ENCODE measurements at regions of chr17 and their contacts with region 1.

Region 1: DNA sequence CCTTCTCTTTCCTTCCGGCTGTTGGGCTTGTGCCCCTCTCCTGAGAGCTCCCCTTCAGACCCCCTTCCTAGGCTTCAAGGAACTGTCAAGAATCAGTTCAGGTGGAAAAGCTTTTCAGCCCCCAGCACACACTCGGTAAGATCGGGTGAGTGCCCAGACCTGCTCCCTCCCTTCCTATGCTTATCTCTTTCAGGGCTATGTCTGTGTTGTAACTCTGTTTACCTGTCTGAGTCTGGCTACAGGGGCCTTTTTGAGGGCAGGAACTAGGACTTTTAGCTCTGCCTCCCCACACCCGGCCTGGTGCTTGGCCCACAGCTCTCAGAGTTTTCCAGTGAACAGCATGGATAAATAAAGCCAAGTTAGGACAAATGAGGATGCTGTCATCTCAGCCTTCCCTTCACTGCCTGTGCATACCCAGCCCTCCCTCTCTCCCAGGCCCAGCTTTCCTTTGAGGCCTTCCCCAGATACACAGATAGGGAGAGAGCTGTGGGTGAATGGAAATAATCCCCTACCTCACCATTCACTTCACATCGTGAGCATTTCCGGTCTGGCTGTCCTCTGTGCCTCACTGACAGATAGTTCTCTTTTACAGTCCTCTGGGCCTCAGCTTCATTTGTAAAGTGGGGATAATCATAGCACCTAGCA is 5.7 kb upstream of the MRPS23 start:
- DNase-seq: no peak
- H3K4me3 ChIP-seq: no peak overlapping the region
- H3K27ac ChIP-seq: no peak overlapping the region
- H3K4me1 ChIP-seq: peaks cover 13% of the 10 kb centered on the region
- H3K27me3 ChIP-seq: no peaks in the 10 kb centered on the region
- CTCF ChIP-seq: no peak

Region 2: GRCh38 chr17:56269556-56270389 is 1585.7 kb before region 1 on chr17:
- intact Hi-C with region 1: no loop called
- DNase-seq: no peak
- H3K4me3 ChIP-seq: no peak overlapping the region
- H3K27ac ChIP-seq: no peak overlapping the region
- H3K4me1 ChIP-seq: no peaks in the 10 kb centered on the region
- H3K27me3 ChIP-seq: no peaks in the 10 kb centered on the region
- CTCF ChIP-seq: no peak

Region 3: GRCh38 chr17:57552114-57552624 is 303.3 kb before region 1 on chr17:
- intact Hi-C with region 1: no loop called
- DNase-seq: no peak
- H3K4me3 ChIP-seq: no peak overlapping the region
- H3K27ac ChIP-seq: no peak overlapping the region
- H3K4me1 ChIP-seq: no peaks in the 10 kb centered on the region
- H3K27me3 ChIP-seq: no peaks in the 10 kb centered on the region
- CTCF ChIP-seq: no peak

Region 4: GRCh38 chr17:57970706-57971105 is 115.2 kb after region 1 on chr17:
- intact Hi-C with region 1: no loop called
- DNase-seq: peak; percentile 4
- H3K4me3 ChIP-seq: no peak overlapping the region
- H3K27ac ChIP-seq: no peak overlapping the region
- H3K4me1 ChIP-seq: no peaks in the 10 kb centered on the region
- H3K27me3 ChIP-seq: no peaks in the 10 kb centered on the region
- CTCF ChIP-seq: no peak

Region 5: DNA sequence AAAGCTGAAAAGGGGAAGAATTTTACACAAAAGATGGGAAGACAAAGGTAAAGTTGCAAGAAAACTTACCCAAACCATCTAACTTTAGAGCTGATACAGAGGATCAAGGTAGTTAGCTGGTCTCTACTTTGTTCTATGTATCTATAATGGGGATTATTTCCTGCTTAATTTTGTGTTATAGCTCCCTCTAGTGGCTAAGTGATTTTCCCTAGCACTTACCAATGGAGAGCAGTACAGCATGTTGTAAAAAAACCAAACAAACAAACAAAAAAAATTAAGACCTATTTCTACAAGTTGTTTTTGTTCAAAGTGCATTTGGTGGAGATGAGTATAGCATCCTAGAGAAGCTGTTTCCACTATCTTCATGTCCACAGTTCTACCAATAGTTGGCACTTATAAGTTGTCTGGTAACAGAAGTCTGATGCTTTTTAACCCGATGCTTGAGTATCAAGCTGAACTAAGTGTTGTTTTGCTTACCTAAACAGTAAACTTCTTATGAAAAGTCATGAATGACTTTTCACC is 144.0 kb after region 1 on chr17:
- intact Hi-C with region 1: loop called (anchors 2 kb)
- DNase-seq: no peak
- H3K4me3 ChIP-seq: no peak overlapping the region
- H3K27ac ChIP-seq: no peak overlapping the region
- H3K4me1 ChIP-seq: no peaks in the 10 kb centered on the region
- H3K27me3 ChIP-seq: no peaks in the 10 kb centered on the region
- CTCF ChIP-seq: peak; percentile 89

Region 6: GRCh38 chr17:58043221-58044181 is 188.0 kb after region 1 on chr17:
- intact Hi-C with region 1: no loop called
- DNase-seq: no peak
- H3K4me3 ChIP-seq: no peak overlapping the region
- H3K27ac ChIP-seq: no peak overlapping the region
- H3K4me1 ChIP-seq: no peaks in the 10 kb centered on the region
- H3K27me3 ChIP-seq: no peaks in the 10 kb centered on the region
- CTCF ChIP-seq: no peak

Region 7: DNA sequence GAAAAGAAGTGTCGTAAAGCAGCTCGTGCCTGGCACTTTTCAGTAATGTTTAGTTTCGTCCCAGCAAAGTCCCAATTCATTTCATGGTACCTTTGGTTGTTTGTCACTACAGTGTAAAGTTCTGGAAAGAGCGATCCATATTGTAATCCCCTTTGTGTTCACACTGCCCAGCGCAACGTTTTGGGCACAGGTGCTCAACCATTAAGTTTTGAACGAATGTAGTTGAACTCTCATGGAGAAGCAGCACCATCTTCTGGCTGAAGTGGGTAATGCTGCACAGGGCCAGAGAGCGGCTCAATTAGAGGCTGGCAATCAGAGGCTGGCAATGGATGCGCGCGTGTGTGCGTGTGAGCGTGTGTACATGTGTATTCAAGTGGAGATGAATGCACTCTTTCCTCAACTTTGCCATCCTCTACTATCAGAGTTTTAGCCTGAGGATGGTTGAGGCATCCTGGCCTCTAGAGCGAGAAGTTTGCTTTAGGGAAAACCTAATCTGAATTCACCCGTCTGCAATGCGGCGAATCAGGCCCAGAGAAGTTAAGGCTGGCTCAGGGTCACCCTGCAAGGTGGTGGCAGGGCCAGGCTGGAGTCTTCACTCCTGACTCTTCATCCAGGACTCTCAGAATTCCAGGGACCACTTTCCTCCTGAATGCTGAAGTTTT is 257.6 kb after region 1 on chr17:
- intact Hi-C with region 1: loop called (anchors 5 kb)
- DNase-seq: peak; percentile 88
- H3K4me3 ChIP-seq: no peak overlapping the region
- H3K27ac ChIP-seq: no peak overlapping the region
- H3K4me1 ChIP-seq: no peaks in the 10 kb centered on the region
- H3K27me3 ChIP-seq: no peaks in the 10 kb centered on the region
- CTCF ChIP-seq: peak; percentile 95

Measured in colonic mucosa (tissue), 4 donors.